Activated T-helper 1 cell treated with anti-CD3 and anti-CD28 coated beads, Interleukin-12 subunit alpha, Interleukin-12 subunit beta, Interleukin-2, Interleukin-4 antibody, amounts not matched to agents 30 ng/mL and 10 ng/mL and 1 ng/mL, durations not matched to agents 14 hours and 24 hours and 36 hours (primary cell): ENCODE measurements at regions of chrX and their contacts with region 1.

Region 1: GRCh38 chrX:141176586-141177451 is at the start of gene LDOC1:
- DNase-seq: peak; percentile 42
- H3K4me3 Mint-ChIP-seq: peak within 1 kb of the TSS; percentile 83
- H3K27ac Mint-ChIP-seq: peak within 1 kb of the TSS; percentile 67
- H3K4me1 Mint-ChIP-seq: peaks cover 5% of the 10 kb centered on the region
- H3K27me3 Mint-ChIP-seq: peaks cover 1% of the 10 kb centered on the region
- total RNA-seq, gene LDOC1: 5.4 and 6.9 TPM in 2 replicates

Region 2: DNA sequence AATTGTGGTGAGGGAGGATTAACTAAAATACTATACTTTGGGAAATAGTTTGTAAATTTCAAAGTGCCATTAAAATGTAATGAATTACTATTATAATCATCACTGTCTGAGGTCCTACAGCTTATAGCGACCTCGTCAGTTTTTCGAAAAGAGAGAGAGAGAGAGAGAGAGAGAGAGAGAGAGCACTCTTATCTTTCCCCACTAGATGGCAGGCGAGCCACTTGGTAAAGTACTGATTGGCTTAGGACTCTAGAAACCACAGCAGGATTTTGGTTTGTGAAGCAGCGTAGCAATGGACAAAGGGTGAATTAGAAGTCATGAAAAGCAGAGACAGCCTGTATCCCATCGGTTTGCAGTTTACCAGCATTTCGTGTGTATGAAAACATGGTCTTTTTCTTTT is 414.8 kb before region 1 on chrX:
- intact Hi-C with region 1: loop called (anchors 10 kb)
- DNase-seq: no peak
- H3K4me3 Mint-ChIP-seq: no peak overlapping the region
- H3K27ac Mint-ChIP-seq: no peak overlapping the region
- H3K4me1 Mint-ChIP-seq: no peaks in the 10 kb centered on the region
- H3K27me3 Mint-ChIP-seq: peaks cover 4% of the 10 kb centered on the region

Region 3: DNA sequence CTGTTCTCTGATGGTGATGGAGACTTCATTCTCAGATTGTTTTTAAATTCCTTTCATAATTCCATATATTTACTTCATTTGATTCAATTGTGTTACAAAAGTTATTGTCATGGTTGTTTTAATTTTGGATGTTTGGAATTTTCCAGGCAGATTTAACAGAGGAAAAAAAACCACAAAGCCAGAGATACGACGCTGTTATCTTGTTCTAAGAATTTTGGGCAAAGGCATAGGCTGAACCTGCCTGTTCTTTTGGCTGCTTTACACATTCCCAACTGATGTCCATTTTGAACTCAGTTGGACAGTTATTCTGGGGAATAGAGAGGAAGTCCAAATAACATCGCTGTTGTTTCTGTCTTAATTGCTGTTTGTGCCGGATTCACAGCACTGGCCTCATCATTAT is 401.6 kb before region 1 on chrX:
- intact Hi-C with region 1: no loop called
- DNase-seq: no peak
- H3K4me3 Mint-ChIP-seq: no peak overlapping the region
- H3K27ac Mint-ChIP-seq: no peak overlapping the region
- H3K4me1 Mint-ChIP-seq: no peaks in the 10 kb centered on the region
- H3K27me3 Mint-ChIP-seq: no peaks in the 10 kb centered on the region

Region 4: GRCh38 chrX:141341341-141341740 is 164.5 kb after region 1 on chrX:
- intact Hi-C with region 1: no loop called
- DNase-seq: no peak
- H3K4me3 Mint-ChIP-seq: no peak overlapping the region
- H3K27ac Mint-ChIP-seq: no peak overlapping the region
- H3K4me1 Mint-ChIP-seq: no peaks in the 10 kb centered on the region
- H3K27me3 Mint-ChIP-seq: no peaks in the 10 kb centered on the region

Region 5: GRCh38 chrX:141619336-141619735 is 442.5 kb after region 1 on chrX:
- intact Hi-C with region 1: no loop called
- DNase-seq: no peak
- H3K4me3 Mint-ChIP-seq: no peak overlapping the region
- H3K27ac Mint-ChIP-seq: no peak overlapping the region
- H3K4me1 Mint-ChIP-seq: no peaks in the 10 kb centered on the region
- H3K27me3 Mint-ChIP-seq: no peaks in the 10 kb centered on the region

Region 6: GRCh38 chrX:141642984-141643383 is 466.2 kb after region 1 on chrX:
- intact Hi-C with region 1: no loop called
- DNase-seq: no peak
- H3K4me3 Mint-ChIP-seq: no peak overlapping the region
- H3K27ac Mint-ChIP-seq: no peak overlapping the region
- H3K4me1 Mint-ChIP-seq: no peaks in the 10 kb centered on the region
- H3K27me3 Mint-ChIP-seq: no peaks in the 10 kb centered on the region